GM13977 (cell line): ENCODE measurements at regions of chr1 and their contacts with region 1.

Region 1: DNA sequence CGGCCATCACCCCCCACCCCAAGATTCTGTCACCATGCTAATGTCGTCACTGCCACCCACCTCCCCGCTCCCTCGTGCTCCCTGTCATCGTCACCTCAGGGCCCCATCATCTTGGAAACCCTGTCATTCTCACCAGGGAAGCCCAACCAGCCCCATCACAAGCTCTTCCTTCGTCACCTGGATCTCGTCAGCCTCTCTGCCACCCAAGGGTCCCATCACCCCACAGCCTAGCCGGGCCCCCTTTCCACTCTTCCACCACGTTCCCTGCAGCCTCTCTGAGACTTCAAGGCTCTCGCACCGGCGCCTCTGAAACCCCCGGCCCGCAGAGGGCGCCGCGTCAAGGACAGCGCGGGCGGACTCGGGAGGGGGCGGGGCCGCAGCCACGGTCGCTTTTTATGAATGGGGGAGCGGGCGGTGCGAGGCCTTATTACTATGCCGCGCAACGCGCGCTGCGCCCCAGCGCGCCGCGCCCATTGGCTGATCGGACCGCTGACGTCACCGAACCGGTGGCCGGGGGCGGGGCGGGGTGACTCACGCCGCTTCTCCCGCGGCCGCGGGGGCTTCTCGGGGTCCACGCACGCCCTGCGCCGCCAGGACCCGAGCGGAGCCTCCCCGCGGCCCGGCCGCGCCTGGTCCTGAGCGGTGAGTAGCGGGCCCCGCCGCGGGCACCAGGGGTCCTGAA is at the start of gene GPR3:
- DNase-seq: peak; percentile 98
- CTCF ChIP-seq: peak; percentile 71

Region 2: DNA sequence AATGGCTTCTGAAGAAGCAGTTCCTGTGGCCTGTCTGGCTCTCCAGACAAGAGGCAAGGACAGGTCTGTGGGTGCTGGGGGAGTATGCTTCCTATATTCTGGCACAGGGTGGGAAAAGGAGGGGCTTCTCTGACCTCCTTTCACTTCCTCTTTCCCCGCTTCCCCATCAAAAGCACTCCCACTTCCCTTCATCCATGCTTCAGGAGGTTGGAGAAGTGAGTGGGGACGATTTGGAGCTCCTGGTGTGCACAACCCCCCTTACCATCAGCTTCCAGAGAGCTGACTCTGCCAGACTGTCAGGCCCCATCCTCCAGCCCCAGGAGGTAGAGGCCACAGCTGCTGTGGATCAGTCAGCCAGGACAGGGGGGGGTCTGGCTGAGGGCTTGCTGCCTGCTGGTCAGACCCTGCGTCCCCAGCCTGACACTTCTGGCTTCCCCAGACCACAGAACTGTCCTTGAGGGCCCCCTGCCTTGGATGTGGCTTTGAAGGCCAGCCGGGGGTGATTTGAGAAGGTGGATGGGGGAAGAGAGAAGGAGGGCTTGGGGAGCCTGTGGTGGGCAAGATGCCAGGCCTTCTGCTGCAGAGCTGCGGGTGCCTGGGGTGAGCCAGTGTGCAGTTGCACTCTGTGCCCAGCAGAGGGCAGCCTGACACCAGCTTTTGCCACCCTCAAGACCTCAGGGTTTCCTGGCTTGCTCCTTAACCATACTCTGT is 91.7 kb before region 1 on chr1:
- in situ Hi-C with region 1: loop called (anchors 5 kb)
- DNase-seq: peak; percentile 90
- CTCF ChIP-seq: peak; percentile 98

Region 3: GRCh38 chr1:27605796-27606707 is 213.8 kb after region 1 on chr1:
- in situ Hi-C with region 1: loop called (anchors 5 kb)
- DNase-seq: peak; percentile 73
- CTCF ChIP-seq: peak; percentile 90